ENCODE measurements at regions of chr6 and their contacts with region 1.

Region 1: DNA sequence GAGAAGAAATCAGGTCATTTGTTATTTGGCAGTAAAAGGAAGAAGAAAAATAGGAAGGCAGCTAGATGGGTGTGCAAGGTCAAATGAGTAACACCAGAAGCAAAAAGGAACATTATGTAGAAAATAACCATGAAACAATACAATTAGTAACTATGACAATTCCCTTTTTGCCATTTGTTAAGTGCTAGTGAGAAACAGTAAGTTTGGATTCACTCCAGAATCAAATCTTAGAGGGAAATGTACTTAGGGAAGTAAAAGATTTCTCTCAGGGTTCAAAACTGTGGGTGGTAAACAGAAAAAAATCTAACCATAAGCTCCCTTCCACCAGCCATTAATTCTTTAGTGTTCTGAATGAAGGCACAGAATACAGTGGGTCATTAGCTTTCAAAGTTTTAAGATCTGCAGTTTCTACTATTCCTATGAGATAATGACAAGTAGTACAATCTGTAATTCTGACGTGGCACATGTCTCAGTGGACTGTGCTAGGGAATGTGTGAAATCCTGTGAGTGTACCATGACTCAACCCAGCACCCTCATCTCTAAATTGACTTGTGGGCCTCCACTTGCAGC is 17.1 kb downstream of the REPS1 start:
- DNase-seq: peak; percentile 54
- H3K4me3 Mint-ChIP-seq: no peak overlapping the region
- H3K27ac Mint-ChIP-seq: peak overlapping the region; percentile 36
- H3K4me1 Mint-ChIP-seq: peaks cover 68% of the 10 kb centered on the region
- H3K27me3 Mint-ChIP-seq: no peaks in the 10 kb centered on the region

Region 2: DNA sequence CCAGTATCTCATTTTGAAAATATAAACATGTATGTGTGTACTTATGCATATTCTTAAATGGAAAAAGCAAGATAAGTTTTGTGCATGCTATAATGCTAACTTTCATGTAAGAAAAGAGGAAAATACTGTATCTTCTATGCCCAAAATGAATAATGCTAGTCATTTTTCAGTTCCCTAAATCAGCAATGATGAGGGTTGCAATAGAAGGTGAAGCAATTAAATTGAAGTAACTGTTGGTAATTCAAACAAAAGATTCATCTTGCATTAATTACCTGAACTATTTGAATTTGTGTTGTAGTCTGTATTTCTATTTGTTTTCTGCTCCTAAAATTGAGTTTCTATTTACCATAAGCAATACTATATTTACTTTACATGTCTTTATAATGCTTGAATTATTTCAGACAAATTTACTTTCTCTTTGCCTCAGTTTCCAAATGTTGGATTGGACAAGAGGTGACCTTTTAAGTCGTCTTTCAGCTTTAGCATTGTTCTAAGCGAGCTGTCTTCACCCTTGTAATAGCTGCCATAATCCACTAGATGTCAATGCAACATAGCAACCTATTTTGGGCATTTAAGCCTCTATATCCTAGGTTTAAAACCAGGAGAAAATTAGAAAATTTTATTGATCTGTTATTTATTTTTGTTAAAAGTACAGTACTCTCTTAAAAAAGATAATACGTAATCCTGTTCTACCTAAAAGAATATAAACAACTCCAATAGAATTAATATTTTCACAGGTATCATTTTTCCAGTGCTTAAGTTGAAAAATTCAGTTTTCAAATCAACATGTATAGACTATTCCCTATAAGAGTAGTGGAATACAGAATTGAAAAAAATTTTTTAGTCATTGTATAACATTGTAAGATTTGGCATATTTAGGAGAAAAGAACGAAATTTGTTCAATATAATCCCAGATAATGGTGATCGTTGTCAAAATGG is 1699.4 kb before region 1 on chr6:
- CTCF ChIA-PET with region 1: no interaction called
- POLR2A ChIA-PET with region 1: no interaction called
- intact Hi-C with region 1: no loop called
- DNase-seq: no peak
- H3K4me3 Mint-ChIP-seq: no peak overlapping the region
- H3K27ac Mint-ChIP-seq: no peak overlapping the region
- H3K4me1 Mint-ChIP-seq: peaks cover 10% of the 10 kb centered on the region
- H3K27me3 Mint-ChIP-seq: peaks cover 5% of the 10 kb centered on the region

Region 3: GRCh38 chr6:138944412-138944811 is 26.5 kb before region 1 on chr6:
- CTCF ChIA-PET with region 1: no interaction called
- POLR2A ChIA-PET with region 1: interaction called, 3 read pairs
- intact Hi-C with region 1: loop called (anchors 2 kb)
- DNase-seq: peak; percentile 62
- H3K4me3 Mint-ChIP-seq: no peak overlapping the region
- H3K27ac Mint-ChIP-seq: no peak overlapping the region
- H3K4me1 Mint-ChIP-seq: peaks cover 43% of the 10 kb centered on the region
- H3K27me3 Mint-ChIP-seq: no peaks in the 10 kb centered on the region

Region 4: GRCh38 chr6:138953451-138953850 is 17.5 kb before region 1 on chr6:
- CTCF ChIA-PET with region 1: interaction called, 3 read pairs
- POLR2A ChIA-PET with region 1: no interaction called
- intact Hi-C with region 1: loop called (anchors 1 kb)
- DNase-seq: no peak
- H3K4me3 Mint-ChIP-seq: no peak overlapping the region
- H3K27ac Mint-ChIP-seq: no peak overlapping the region
- H3K4me1 Mint-ChIP-seq: peaks cover 58% of the 10 kb centered on the region
- H3K27me3 Mint-ChIP-seq: no peaks in the 10 kb centered on the region